ENCODE measurements at regions of chr17 and their contacts with region 1.

Region 1: DNA sequence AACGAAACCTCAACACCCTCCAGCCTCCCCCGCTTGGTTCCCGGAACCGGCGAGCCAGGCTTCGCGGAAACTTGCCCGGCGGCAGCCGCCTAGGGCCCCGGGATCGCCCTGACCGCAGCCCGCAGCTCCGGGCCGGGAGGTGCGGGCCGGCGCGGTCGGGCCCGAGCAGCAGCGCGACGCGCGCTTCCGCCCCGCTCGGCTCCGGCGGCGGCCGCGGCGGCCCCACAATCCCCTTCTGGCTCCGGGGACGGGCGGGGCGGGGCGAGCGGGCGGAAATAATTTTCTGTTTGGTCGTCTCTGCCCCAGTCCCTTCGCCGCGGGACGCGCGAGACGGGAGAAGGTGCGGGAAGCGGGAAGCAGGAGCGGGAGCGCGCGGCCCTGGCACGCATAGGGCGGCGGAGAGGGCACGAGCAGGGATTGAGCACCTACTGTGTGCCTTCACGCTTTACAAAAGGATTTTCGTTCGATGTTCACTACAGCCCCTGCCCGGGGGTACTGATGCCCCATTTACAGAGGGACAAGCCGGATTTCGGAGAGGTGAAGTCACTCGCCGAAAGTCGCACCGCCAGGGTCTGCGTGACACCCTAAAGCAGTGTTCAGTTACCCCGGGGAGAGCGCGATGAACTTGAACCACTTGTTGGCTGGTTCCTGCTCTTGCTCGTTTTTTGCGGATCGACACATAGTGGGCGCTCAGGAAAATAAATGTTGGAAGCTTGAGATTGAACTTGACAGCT is 2.7 kb upstream of the MLLT6 start:
- DNase-seq: peak; percentile 88 to 95 (median 95)
- ATAC-seq: peak; percentile 68 to 81
- H3K4me3 ChIP-seq: peak overlapping the region; percentile 97
- H3K27ac ChIP-seq: peak overlapping the region; percentile 98
- H3K4me1 ChIP-seq: peaks cover 7% of the 10 kb centered on the region
- H3K27me3 ChIP-seq: no peaks in the 10 kb centered on the region

Region 2: GRCh38 chr17:38533866-38534497 is 168.4 kb before region 1 on chr17:
- intact Hi-C with region 1: no loop called
- DNase-seq: no peak
- ATAC-seq: no peak
- H3K4me3 ChIP-seq: no peak overlapping the region
- H3K27ac ChIP-seq: no peak overlapping the region
- H3K4me1 ChIP-seq: no peaks in the 10 kb centered on the region
- H3K27me3 ChIP-seq: no peaks in the 10 kb centered on the region

Region 3: DNA sequence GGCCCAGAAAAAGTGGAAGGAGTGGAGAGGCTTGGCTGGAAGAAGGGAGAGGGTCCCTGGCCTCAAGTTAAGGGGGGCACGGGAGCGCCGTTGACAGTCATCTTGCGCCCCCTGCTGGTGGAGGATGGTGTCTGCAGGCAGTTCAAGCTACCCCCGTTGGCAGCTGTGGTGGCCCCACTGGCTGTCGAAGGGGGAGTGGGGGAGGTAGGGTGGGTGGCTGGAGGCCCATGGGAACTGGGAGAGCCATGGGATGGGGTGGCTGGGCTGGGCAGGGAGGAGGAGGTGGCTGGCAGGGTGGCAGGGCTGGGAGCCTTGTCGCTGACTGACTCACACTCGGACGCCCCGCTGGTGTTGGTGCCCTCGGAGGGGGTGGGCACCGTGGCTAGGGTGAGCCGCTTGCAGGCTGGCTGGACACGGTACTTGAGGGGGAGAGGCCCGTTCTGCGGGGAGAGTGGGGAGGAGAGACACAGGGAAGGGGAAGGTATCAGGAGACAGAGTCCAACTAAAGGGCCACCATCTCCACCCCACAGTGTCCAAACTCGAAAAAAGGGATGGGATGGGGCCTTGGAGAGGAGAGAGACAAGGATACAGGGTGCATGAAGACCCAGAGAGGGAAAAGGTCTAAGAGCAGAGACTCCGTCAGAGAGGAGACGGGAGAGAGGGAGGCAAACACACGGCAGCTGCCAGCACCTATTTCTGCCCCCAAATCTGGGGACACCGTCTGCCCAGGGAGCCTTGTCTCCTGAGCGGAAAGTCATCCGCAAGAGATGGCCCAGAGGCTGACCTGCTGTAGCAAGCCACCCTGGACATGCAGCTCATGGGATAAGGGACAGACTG is 33.0 kb after region 1 on chr17:
- intact Hi-C with region 1: loop called in 2 of 4 experiments (anchors 5 kb)
- DNase-seq: peak; percentile 63 to 87 (median 83)
- ATAC-seq: peak; percentile 1 to 11
- H3K4me3 ChIP-seq: no peak overlapping the region
- H3K27ac ChIP-seq: no peak overlapping the region
- H3K4me1 ChIP-seq: peaks cover 2% of the 10 kb centered on the region
- H3K27me3 ChIP-seq: no peaks in the 10 kb centered on the region

Region 4: DNA sequence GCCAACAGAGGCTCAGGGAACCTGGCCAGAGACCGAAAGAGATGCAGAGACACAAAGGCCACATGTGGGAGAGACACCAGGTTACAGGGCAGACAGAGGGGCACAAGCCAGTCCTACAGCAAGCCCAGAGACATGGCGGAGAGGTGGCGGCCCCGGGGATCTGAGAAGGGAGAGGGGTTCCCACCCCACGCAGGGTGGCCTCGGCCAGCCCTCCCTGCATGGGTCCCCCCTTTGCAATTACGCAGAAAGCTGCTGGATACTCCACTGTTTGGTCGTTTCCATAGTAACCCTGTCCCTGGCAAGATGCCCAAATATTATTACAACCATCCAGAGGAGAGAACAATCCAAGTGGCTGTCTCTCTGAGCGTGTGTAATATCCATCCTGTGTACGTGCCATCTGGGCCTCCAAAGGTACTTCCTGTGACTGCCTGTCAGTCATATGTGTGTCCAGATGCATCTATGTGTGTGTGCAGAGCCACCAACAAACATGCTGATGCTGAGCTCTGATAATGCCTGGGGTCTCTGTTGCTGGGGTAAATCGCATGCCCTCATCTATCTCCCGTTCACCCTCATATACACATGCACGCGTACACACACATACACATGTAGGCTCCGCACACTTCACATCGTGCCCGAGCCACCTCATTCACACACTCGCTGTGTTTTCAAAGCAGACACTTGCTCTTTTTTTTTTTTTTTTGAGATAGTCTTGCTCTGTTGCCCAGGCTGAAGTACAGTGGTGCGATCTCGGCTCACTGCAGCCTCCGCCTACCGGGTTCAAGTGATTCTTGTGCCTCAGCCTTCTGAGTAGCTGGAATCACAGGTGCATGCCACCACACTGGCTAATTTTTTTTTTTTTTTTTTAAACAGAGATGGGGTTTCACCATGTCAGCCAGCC is 40.3 kb after region 1 on chr17:
- intact Hi-C with region 1: loop called in 2 of 4 experiments (anchors 5 kb)
- DNase-seq: peak; percentile 45 to 69 (median 67)
- ATAC-seq: peak; percentile 58 to 62
- H3K4me3 ChIP-seq: no peak overlapping the region
- H3K27ac ChIP-seq: peak overlapping the region; percentile 93
- H3K4me1 ChIP-seq: peaks cover 17% of the 10 kb centered on the region
- H3K27me3 ChIP-seq: no peaks in the 10 kb centered on the region

Measured in right cardiac atrium (tissue), 5 donors.